HCT116 (cell line): ENCODE measurements at regions of chr14 and their contacts with region 1.

Region 1: DNA sequence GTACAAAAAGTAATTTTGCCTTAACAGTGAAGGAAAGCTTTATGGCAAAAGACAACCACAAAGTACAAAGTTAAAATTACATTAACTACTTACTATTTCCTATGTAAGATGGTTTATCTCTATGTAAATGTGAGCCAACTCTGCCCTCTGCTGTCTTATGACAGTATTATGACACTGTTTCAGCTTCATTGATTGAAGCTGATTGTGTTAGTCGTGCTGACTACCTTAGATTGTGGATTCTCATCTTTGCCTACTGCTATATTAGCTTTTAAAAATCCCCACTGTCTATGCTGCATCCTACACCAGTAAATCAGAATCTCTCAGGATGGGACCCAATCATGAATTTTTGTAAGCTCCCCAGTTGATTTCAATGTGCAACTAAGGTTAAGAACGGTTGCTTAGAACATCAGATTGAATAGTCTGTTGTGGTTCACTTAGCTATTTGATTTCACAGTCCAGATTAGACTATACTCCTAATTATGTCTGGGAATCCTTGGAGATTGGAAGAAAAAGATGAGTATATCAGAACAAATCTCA is 12.2 kb upstream of the SPTB start:
- DNase-seq: peak; percentile 59
- ATAC-seq: peak; percentile 98
- H3K4me3 ChIP-seq: no peak overlapping the region
- H3K27ac ChIP-seq: no peak overlapping the region
- H3K4me1 ChIP-seq: no peaks in the 10 kb centered on the region
- H3K27me3 ChIP-seq: no peaks in the 10 kb centered on the region
- CTCF ChIP-seq: peak; percentile 35 to 85 (median 65)
- POLR2A ChIP-seq: no peak
- RAD21 ChIP-seq: peak; percentile 88

Region 2: GRCh38 chr14:64636208-64636979 is 255.5 kb before region 1 on chr14:
- CTCF ChIA-PET with region 1: interaction called, 10 read pairs
- POLR2A ChIA-PET with region 1: no interaction called
- RAD21 ChIA-PET with region 1: no interaction called
- intact Hi-C with region 1: no loop called
- DNase-seq: peak; percentile 47
- ATAC-seq: peak; percentile 98
- H3K4me3 ChIP-seq: no peak overlapping the region
- H3K27ac ChIP-seq: no peak overlapping the region
- H3K4me1 ChIP-seq: peaks cover 2 to 8% of the 10 kb centered on the region in 2 experiments; a peak in 2 of 4 replicates
- H3K27me3 ChIP-seq: no peaks in the 10 kb centered on the region
- CTCF ChIP-seq: peak; percentile 78 to 94 (median 79)
- POLR2A ChIP-seq: no peak
- RAD21 ChIP-seq: peak; percentile 87

Region 3: GRCh38 chr14:64654246-64654900 is 237.5 kb before region 1 on chr14:
- CTCF ChIA-PET with region 1: no interaction called
- POLR2A ChIA-PET with region 1: no interaction called
- RAD21 ChIA-PET with region 1: no interaction called
- intact Hi-C with region 1: no loop called
- DNase-seq: no peak
- ATAC-seq: no peak
- H3K4me3 ChIP-seq: no peak overlapping the region
- H3K27ac ChIP-seq: no peak overlapping the region
- H3K4me1 ChIP-seq: no peaks in the 10 kb centered on the region
- H3K27me3 ChIP-seq: no peaks in the 10 kb centered on the region
- CTCF ChIP-seq: no peak
- POLR2A ChIP-seq: no peak
- RAD21 ChIP-seq: no peak

Region 4: DNA sequence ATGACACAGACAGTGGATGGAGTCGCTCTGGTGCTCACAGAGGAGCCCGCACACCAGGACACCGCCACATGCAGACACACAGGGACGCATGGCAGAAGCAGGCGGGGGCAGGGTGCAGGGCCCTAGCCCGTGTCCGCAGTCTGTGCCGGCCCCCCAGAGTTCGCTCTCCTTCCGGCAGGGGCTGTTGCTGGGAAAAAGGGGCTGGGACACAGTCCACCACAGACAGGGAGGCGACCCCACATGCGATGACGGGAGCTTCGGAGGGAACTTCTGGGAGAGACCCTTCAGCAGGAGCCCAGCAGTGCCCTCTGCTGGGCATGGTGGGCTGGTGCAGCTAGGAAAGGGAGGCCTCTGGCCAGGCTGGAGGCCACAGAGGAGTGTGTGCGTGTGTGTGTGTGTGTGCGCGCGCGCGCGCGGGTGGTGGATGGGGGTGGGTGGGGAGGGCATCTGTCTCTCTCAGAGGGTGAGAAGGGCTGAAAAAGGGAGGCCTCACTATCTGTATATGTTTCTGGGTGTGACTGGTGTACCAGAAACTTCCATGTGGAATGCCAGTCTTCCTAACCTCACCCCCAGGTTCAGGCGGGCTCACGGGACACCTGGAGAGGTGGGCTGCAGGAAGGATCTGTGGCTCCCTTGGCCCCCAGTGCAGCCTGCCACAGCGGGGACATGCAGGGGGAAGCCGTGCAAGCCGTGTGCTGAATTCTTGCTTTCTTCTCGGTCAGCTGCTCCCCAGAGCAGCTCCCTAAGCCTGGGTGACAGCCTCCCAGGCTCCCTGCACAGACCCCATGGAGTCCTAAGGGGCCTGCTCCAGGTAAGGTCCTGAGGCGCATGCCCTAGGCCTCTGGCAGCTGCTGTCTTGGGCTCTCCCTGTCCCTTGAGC is 127.0 kb before region 1 on chr14:
- CTCF ChIA-PET with region 1: interaction called, 13 read pairs
- POLR2A ChIA-PET with region 1: no interaction called
- RAD21 ChIA-PET with region 1: interaction called in 1 of 2 experiments, 5 read pairs
- intact Hi-C with region 1: loop called (anchors 5 kb)
- DNase-seq: peak; percentile 44
- ATAC-seq: peak; percentile 64
- H3K4me3 ChIP-seq: no peak overlapping the region
- H3K27ac ChIP-seq: no peak overlapping the region
- H3K4me1 ChIP-seq: peaks cover 33 to 60% of the 10 kb centered on the region in 2 experiments
- H3K27me3 ChIP-seq: no peaks in the 10 kb centered on the region
- CTCF ChIP-seq: peak; percentile 72 to 96 (median 79); a peak in 5 of 6 replicates
- POLR2A ChIP-seq: no peak
- RAD21 ChIP-seq: peak; percentile 85

Region 5: GRCh38 chr14:64800000-64800399 is 91.9 kb before region 1 on chr14:
- CTCF ChIA-PET with region 1: interaction called, 45 read pairs
- POLR2A ChIA-PET with region 1: interaction called, 3 read pairs
- RAD21 ChIA-PET with region 1: interaction called, 7 to 13 read pairs
- intact Hi-C with region 1: loop called (anchors 5 kb)
- DNase-seq: peak; percentile 36
- ATAC-seq: peak; percentile 90
- H3K4me3 ChIP-seq: no peak overlapping the region
- H3K27ac ChIP-seq: no peak overlapping the region
- H3K4me1 ChIP-seq: peaks cover 6 to 10% of the 10 kb centered on the region in 2 experiments; a peak in 3 of 4 replicates
- H3K27me3 ChIP-seq: no peaks in the 10 kb centered on the region
- CTCF ChIP-seq: peak; percentile 49 to 88 (median 80); a peak in 5 of 6 replicates
- POLR2A ChIP-seq: no peak
- RAD21 ChIP-seq: peak; percentile 40

Region 6: DNA sequence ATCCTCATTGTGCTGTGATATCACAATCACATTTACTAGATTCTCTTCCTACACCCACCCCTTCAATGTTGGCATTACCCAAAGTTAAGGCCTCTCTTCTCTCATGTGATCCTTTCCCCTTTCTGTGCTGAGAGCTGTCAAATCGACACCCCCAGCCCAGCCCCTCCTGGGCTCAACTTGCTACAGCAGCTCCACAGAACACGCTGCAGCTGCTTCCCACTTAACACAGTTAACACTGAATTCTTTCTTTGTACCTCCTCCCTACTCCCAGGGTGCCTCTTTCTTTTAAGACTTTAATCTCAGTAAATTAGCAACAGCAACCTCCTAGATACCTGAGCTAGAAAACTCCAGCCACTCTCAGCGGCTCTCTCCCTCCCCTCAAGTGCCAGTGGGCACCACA is 30.0 kb before region 1 on chr14:
- CTCF ChIA-PET with region 1: no interaction called
- POLR2A ChIA-PET with region 1: no interaction called
- RAD21 ChIA-PET with region 1: no interaction called
- intact Hi-C with region 1: no loop called
- DNase-seq: no peak
- ATAC-seq: no peak
- H3K4me3 ChIP-seq: no peak overlapping the region
- H3K27ac ChIP-seq: no peak overlapping the region
- H3K4me1 ChIP-seq: no peaks in the 10 kb centered on the region
- H3K27me3 ChIP-seq: peaks cover 3% of the 10 kb centered on the region; the same call in 1 of the 2 replicates
- CTCF ChIP-seq: no peak
- POLR2A ChIP-seq: no peak
- RAD21 ChIP-seq: no peak

Region 7: GRCh38 chr14:64880221-64881121 is 11.4 kb before region 1 on chr14:
- CTCF ChIA-PET with region 1: interaction called, 37 read pairs
- POLR2A ChIA-PET with region 1: no interaction called
- RAD21 ChIA-PET with region 1: no interaction called
- intact Hi-C with region 1: no loop called
- DNase-seq: peak; percentile 26
- ATAC-seq: peak; percentile 89
- H3K4me3 ChIP-seq: peak overlapping the region; percentile 55 to 59
- H3K27ac ChIP-seq: 0 out of 2 replicates have a peak overlapping the region, but pooled peaks have one; percentile 24
- H3K4me1 ChIP-seq: peaks cover 7 to 16% of the 10 kb centered on the region in 2 experiments; a peak in 3 of 4 replicates
- H3K27me3 ChIP-seq: no peaks in the 10 kb centered on the region
- CTCF ChIP-seq: no peak
- POLR2A ChIP-seq: no peak
- RAD21 ChIP-seq: no peak

Region 8: GRCh38 chr14:64928239-64929013 is 36.5 kb after region 1 on chr14:
- CTCF ChIA-PET with region 1: no interaction called
- POLR2A ChIA-PET with region 1: no interaction called
- RAD21 ChIA-PET with region 1: no interaction called
- intact Hi-C with region 1: no loop called
- DNase-seq: no peak
- ATAC-seq: no peak
- H3K4me3 ChIP-seq: no peak overlapping the region
- H3K27ac ChIP-seq: no peak overlapping the region
- H3K4me1 ChIP-seq: no peaks in the 10 kb centered on the region
- H3K27me3 ChIP-seq: no peaks in the 10 kb centered on the region
- CTCF ChIP-seq: no peak
- POLR2A ChIP-seq: no peak
- RAD21 ChIP-seq: no peak

Region 9: GRCh38 chr14:64997108-64997794 is 105.3 kb after region 1 on chr14:
- CTCF ChIA-PET with region 1: no interaction called
- POLR2A ChIA-PET with region 1: no interaction called
- RAD21 ChIA-PET with region 1: no interaction called
- intact Hi-C with region 1: no loop called
- DNase-seq: no peak
- ATAC-seq: peak; percentile 47
- H3K4me3 ChIP-seq: no peak overlapping the region
- H3K27ac ChIP-seq: no peak overlapping the region
- H3K4me1 ChIP-seq: peaks cover 4 to 16% of the 10 kb centered on the region in 2 experiments; a peak in 2 of 4 replicates
- H3K27me3 ChIP-seq: no peaks in the 10 kb centered on the region
- CTCF ChIP-seq: no peak
- POLR2A ChIP-seq: no peak
- RAD21 ChIP-seq: no peak